Naive thymus-derived CD4-positive, alpha-beta T cell (primary cell): ENCODE measurements at regions of chr12 and their contacts with region 1.

Region 1: DNA sequence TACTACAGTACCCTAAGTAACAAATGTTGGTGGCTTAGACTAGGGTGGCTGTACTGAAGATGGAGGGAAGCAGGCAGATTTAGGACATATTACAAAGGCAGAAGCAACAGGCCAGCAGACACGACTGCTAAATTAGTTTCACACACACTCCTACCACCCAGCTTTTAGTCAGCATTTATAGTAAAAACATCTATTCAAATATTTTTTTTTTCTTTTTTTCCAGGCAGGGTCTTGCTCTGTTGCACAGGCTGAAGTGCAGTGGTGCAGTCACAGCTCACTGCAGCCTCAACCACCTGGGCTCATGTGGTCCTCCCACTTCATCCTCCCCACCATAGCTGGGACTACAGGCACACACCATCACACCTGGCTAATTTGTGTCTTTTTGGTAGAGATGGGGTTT is 72.9 kb downstream of the CDK17 start:
- DNase-seq: no peak
- ATAC-seq: peak; percentile 16
- H3K4me3 ChIP-seq: no peak overlapping the region
- H3K4me3 Mint-ChIP-seq: peak overlapping the region in 9 of 10 donors; percentile 4 to 76 (median 57)
- H3K27ac ChIP-seq: peak overlapping the region; percentile 52
- H3K27ac Mint-ChIP-seq: peak overlapping the region in 8 of 9 donors; percentile 69 to 92 (median 82)
- H3K4me1 ChIP-seq: peaks cover 9 to 43% of the 10 kb centered on the region in 2 donors
- H3K4me1 Mint-ChIP-seq: peaks cover 43 to 80% (median 61%) of the 10 kb centered on the region in 7 donors
- H3K27me3 ChIP-seq: no peaks in the 10 kb centered on the region
- H3K27me3 Mint-ChIP-seq: no peaks in the 10 kb centered on the region

Region 2: GRCh38 chr12:95623585-95624042 is 703.7 kb before region 1 on chr12:
- CTCF ChIA-PET with region 1: no interaction called
- POLR2A ChIA-PET with region 1: no interaction called
- intact Hi-C with region 1: no loop called
- DNase-seq: no peak
- ATAC-seq: peak; percentile 61
- H3K4me3 ChIP-seq: no peak overlapping the region
- H3K4me3 Mint-ChIP-seq: no peak overlapping the region
- H3K27ac ChIP-seq: no peak overlapping the region
- H3K27ac Mint-ChIP-seq: no peak overlapping the region
- H3K4me1 ChIP-seq: no peaks in the 10 kb centered on the region
- H3K4me1 Mint-ChIP-seq: no peaks in the 10 kb centered on the region
- H3K27me3 ChIP-seq: no peaks in the 10 kb centered on the region
- H3K27me3 Mint-ChIP-seq: peaks cover 0 to 24% (median 0%) of the 10 kb centered on the region in 5 donors

Region 3: GRCh38 chr12:96274331-96274730 is 53.0 kb before region 1 on chr12:
- CTCF ChIA-PET with region 1: no interaction called
- POLR2A ChIA-PET with region 1: no interaction called
- intact Hi-C with region 1: loop called in 1 of 2 experiments (anchors 5 kb)
- DNase-seq: no peak
- ATAC-seq: no peak
- H3K4me3 ChIP-seq: no peak overlapping the region
- H3K4me3 Mint-ChIP-seq: no peak overlapping the region
- H3K27ac ChIP-seq: no peak overlapping the region
- H3K27ac Mint-ChIP-seq: peak overlapping the region in 8 of 9 donors; percentile 26 to 82 (median 52)
- H3K4me1 ChIP-seq: no peaks in the 10 kb centered on the region
- H3K4me1 Mint-ChIP-seq: peaks cover 8 to 35% (median 28%) of the 10 kb centered on the region in 7 donors
- H3K27me3 ChIP-seq: no peaks in the 10 kb centered on the region
- H3K27me3 Mint-ChIP-seq: no peaks in the 10 kb centered on the region

Region 4: GRCh38 chr12:96294831-96295230 is 32.5 kb before region 1 on chr12:
- CTCF ChIA-PET with region 1: no interaction called
- POLR2A ChIA-PET with region 1: interaction called, 5 read pairs
- intact Hi-C with region 1: loop called in 1 of 2 experiments (anchors 5 kb)
- DNase-seq: peak in 3 of 9 donors; percentile 10 to 29 (median 14)
- ATAC-seq: no peak
- H3K4me3 ChIP-seq: no peak overlapping the region
- H3K4me3 Mint-ChIP-seq: peak overlapping the region in 4 of 10 donors; percentile 13 to 69 (median 39)
- H3K27ac ChIP-seq: no peak overlapping the region
- H3K27ac Mint-ChIP-seq: peak overlapping the region in 5 of 9 donors; percentile 39 to 81 (median 64)
- H3K4me1 ChIP-seq: peaks cover 7 to 11% of the 10 kb centered on the region in 2 donors
- H3K4me1 Mint-ChIP-seq: peaks cover 6 to 52% (median 22%) of the 10 kb centered on the region in 7 donors
- H3K27me3 ChIP-seq: no peaks in the 10 kb centered on the region
- H3K27me3 Mint-ChIP-seq: no peaks in the 10 kb centered on the region

Region 5: GRCh38 chr12:96343347-96343954 is 16.1 kb after region 1 on chr12:
- CTCF ChIA-PET with region 1: interaction called, 3 read pairs
- POLR2A ChIA-PET with region 1: interaction called, 6 read pairs
- intact Hi-C with region 1: loop called (anchors 1 to 2 kb)
- DNase-seq: no peak
- ATAC-seq: peak; percentile 65
- H3K4me3 ChIP-seq: no peak overlapping the region
- H3K4me3 Mint-ChIP-seq: peak overlapping the region in 7 of 10 donors; percentile 22 to 64 (median 61)
- H3K27ac ChIP-seq: no peak overlapping the region
- H3K27ac Mint-ChIP-seq: peak overlapping the region in 5 of 9 donors; percentile 22 to 71 (median 48)
- H3K4me1 ChIP-seq: peaks cover 10 to 15% of the 10 kb centered on the region in 2 donors
- H3K4me1 Mint-ChIP-seq: peaks cover 37 to 70% (median 61%) of the 10 kb centered on the region in 7 donors
- H3K27me3 ChIP-seq: no peaks in the 10 kb centered on the region
- H3K27me3 Mint-ChIP-seq: no peaks in the 10 kb centered on the region

Region 6: GRCh38 chr12:96623656-96624217 is 296.4 kb after region 1 on chr12:
- CTCF ChIA-PET with region 1: no interaction called
- POLR2A ChIA-PET with region 1: no interaction called
- intact Hi-C with region 1: no loop called
- DNase-seq: no peak
- ATAC-seq: no peak
- H3K4me3 ChIP-seq: no peak overlapping the region
- H3K4me3 Mint-ChIP-seq: no peak overlapping the region
- H3K27ac ChIP-seq: no peak overlapping the region
- H3K27ac Mint-ChIP-seq: no peak overlapping the region
- H3K4me1 ChIP-seq: no peaks in the 10 kb centered on the region
- H3K4me1 Mint-ChIP-seq: no peaks in the 10 kb centered on the region
- H3K27me3 ChIP-seq: no peaks in the 10 kb centered on the region
- H3K27me3 Mint-ChIP-seq: peaks cover 0 to 9% (median 0%) of the 10 kb centered on the region in 5 donors

Region 7: DNA sequence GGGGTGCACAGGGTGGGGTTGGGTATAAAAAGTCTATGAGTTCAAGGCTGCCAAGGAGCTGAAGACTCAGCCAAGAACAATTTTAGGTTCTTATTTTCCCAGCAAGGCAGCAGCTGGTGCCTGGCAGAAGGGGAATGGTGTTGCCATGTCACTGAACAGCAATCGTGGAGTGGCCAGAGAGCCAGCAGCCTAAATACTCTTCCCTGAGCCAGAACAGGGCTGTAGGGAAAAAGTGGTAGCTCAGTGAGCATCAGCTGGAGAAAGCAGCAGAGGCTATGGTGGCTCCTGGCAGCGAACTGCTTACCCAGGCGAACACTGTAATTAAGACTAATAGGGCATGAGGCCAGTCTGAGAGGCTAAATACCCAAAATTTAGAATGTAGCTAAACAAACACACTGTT is 1470.1 kb after region 1 on chr12:
- CTCF ChIA-PET with region 1: no interaction called
- POLR2A ChIA-PET with region 1: no interaction called
- intact Hi-C with region 1: no loop called
- DNase-seq: no peak
- ATAC-seq: no peak
- H3K4me3 ChIP-seq: no peak overlapping the region
- H3K4me3 Mint-ChIP-seq: no peak overlapping the region
- H3K27ac ChIP-seq: no peak overlapping the region
- H3K27ac Mint-ChIP-seq: no peak overlapping the region
- H3K4me1 ChIP-seq: no peaks in the 10 kb centered on the region
- H3K4me1 Mint-ChIP-seq: no peaks in the 10 kb centered on the region
- H3K27me3 ChIP-seq: no peaks in the 10 kb centered on the region
- H3K27me3 Mint-ChIP-seq: peaks cover 0 to 4% (median 0%) of the 10 kb centered on the region in 5 donors